ENCODE measurements at regions of chr6 and their contacts with region 1.

Region 1: DNA sequence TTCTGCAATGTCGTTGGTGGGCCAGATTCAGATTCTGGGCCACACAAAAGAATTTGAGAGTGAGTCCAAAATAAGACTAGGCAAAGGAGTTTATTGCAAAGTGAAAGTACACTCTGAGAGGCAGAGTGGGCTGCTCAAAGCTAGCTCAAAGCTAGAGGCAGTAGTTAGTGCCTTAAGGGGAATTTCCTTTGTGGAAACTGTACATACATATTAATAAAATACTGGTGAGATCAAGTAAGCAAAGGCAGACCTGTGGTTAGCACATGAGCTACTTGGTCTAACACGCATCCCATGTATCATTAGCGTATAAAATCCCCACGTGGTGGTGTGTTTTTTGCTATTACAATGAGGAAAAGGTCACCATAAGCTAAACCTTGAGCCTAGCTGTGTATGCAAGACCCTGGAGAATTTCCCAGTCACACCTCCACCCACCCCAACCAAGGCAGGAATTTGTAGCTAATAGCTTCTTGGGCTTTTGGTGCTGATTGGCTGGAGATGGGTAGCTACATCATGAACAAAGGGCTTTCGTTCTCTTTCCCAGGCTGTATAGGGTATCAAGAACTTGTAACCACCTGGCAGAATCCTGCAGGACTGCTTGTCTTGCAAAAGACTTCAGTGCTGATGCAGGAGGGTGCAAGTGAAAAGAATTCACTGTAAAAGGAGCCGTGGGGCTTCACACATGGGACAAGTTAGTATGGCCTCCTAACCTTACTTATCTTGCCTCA is 14.7 kb upstream of the TRIM26 start:
- DNase-seq: peak; percentile 27
- CTCF ChIP-seq: no peak

Region 2: DNA sequence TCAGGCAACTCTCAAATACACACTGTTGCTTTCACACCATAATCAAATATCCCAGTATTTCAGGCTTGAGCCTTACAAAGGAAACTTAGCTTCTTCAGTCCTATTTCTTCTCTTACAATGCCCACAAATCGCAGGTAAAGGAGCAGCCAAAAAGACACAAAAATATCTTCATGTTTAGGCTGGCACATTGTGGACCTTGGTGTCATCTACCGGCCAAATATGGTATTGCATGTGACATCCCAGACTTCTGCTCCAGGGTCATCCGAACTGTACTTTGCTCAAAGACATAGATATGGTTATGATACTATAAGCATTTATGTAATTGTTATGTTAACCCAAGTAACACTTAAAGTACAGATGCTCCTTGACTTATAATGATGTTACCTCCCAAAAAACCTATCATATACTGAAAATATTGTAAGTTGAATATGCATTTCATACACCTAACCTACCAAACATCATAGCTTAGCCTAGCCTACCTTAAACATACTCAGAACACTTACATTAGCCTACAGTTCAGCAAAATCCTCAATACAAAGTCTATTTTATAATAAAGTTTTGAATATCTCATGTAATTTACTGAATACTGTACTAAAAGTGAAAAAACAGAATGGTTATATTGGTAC is 638.4 kb before region 1 on chr6:
- CTCF ChIA-PET with region 1: no interaction called
- POLR2A ChIA-PET with region 1: no interaction called
- DNase-seq: peak; percentile 58
- CTCF ChIP-seq: peak; percentile 88

Region 3: GRCh38 chr6:30206799-30207618 is 20.9 kb before region 1 on chr6:
- CTCF ChIA-PET with region 1: no interaction called
- POLR2A ChIA-PET with region 1: no interaction called
- DNase-seq: no peak
- CTCF ChIP-seq: no peak

Region 4: GRCh38 chr6:30238174-30238795 is 10.4 kb after region 1 on chr6:
- CTCF ChIA-PET with region 1: interaction called, 25 read pairs
- POLR2A ChIA-PET with region 1: no interaction called
- DNase-seq: peak; percentile 49
- CTCF ChIP-seq: peak; percentile 67

Measured in GM10248 (cell line).